CD8-positive, alpha-beta T cell (primary cell): ENCODE measurements at regions of chr7 and their contacts with region 1.

Region 1: GRCh38 chr7:30348083-30348560 is 63.7 kb downstream of the ZNRF2 start:
- DNase-seq: peak in 8 of 9 experiments; percentile 23 to 92 (median 56)
- ATAC-seq: peak; percentile 89
- H3K4me3 ChIP-seq: peak overlapping the region in 1 of 2 experiments; percentile 11
- H3K4me3 Mint-ChIP-seq: peak overlapping the region; percentile 36
- H3K27ac ChIP-seq: peak overlapping the region; percentile 39 to 72
- H3K27ac Mint-ChIP-seq: peak overlapping the region; percentile 85
- H3K4me1 ChIP-seq: peaks cover 21% of the 10 kb centered on the region
- H3K4me1 Mint-ChIP-seq: peaks cover 59% of the 10 kb centered on the region
- H3K27me3 ChIP-seq: no peaks in the 10 kb centered on the region
- H3K27me3 Mint-ChIP-seq: no peaks in the 10 kb centered on the region
- CTCF ChIP-seq: no peak

Region 2: GRCh38 chr7:30038182-30038980 is 309.7 kb before region 1 on chr7:
- CTCF ChIA-PET with region 1: no interaction called
- POLR2A ChIA-PET with region 1: no interaction called
- intact Hi-C with region 1: no loop called
- DNase-seq: no peak
- ATAC-seq: no peak
- H3K4me3 ChIP-seq: no peak overlapping the region
- H3K4me3 Mint-ChIP-seq: no peak overlapping the region
- H3K27ac ChIP-seq: no peak overlapping the region
- H3K27ac Mint-ChIP-seq: no peak overlapping the region
- H3K4me1 ChIP-seq: no peaks in the 10 kb centered on the region
- H3K4me1 Mint-ChIP-seq: peaks cover 17% of the 10 kb centered on the region
- H3K27me3 ChIP-seq: no peaks in the 10 kb centered on the region
- H3K27me3 Mint-ChIP-seq: no peaks in the 10 kb centered on the region
- CTCF ChIP-seq: no peak

Region 3: DNA sequence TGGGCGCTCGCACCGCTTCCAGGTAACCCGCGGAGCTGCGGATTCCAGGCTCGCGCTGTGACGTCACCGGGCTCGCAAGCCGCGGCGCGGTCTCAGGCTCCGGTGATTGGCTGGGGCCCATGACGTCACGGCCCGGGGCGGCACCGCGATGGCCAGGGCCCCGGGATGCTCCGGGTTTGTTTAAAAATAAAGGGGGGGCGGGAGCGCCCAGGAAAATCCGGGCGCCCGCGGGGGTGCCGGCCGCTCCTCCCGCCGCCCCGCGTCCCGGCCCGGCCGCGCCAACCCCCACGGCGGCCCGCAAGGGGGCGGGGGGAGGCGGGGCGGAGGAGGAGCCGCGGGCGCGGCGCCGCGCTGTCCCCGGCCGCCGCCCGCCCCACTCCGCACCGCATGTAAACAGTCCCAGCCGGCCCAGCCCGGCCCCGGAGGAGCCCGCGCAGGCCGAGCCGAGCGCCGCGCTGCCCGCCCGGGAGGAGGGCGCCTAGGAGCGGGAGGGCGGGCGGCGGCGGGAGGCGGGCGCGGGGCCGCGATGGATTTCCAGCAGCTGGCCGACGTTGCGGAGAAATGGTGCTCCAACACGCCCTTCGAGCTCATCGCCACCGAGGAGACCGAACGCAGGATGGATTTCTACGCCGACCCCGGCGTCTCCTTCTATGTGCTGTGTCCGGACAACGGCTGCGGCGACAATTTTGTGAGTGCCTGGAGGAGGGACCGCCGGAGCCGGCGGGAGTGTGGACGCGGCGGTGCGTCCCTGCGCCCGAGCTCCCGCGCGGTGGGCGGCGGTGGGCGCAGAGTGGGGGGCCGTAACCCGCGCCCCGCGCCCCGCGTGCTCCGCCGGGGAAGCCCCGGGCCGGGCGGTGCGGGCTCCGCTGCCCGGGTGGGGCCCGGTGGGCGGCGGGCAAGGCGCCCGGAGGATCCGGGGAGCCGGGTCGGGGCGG is 213.2 kb before region 1 on chr7 and contains the start of gene MTURN:
- CTCF ChIA-PET with region 1: interaction called, 3 read pairs
- POLR2A ChIA-PET with region 1: interaction called, 3 read pairs
- intact Hi-C with region 1: loop called (anchors 5 to 10 kb)
- DNase-seq: peak; percentile 68 to 95 (median 86)
- ATAC-seq: peak; percentile 80
- H3K4me3 ChIP-seq: peak within 1 kb of the TSS; percentile 74 to 78
- H3K4me3 Mint-ChIP-seq: peak within 1 kb of the TSS; percentile 91
- H3K27ac ChIP-seq: peak within 1 kb of the TSS; percentile 4 to 49
- H3K27ac Mint-ChIP-seq: peak within 1 kb of the TSS; percentile 90
- H3K4me1 ChIP-seq: peaks cover 15% of the 10 kb centered on the region
- H3K4me1 Mint-ChIP-seq: peaks cover 11% of the 10 kb centered on the region
- H3K27me3 ChIP-seq: no peaks in the 10 kb centered on the region
- H3K27me3 Mint-ChIP-seq: no peaks in the 10 kb centered on the region
- CTCF ChIP-seq: no peak
- total RNA-seq, gene MTURN: 16.1 to 19.7 TPM

Region 4: GRCh38 chr7:30276203-30276900 is 71.8 kb before region 1 on chr7:
- CTCF ChIA-PET with region 1: interaction called, 75 read pairs
- POLR2A ChIA-PET with region 1: interaction called, 5 read pairs
- intact Hi-C with region 1: loop called (anchors 1 to 2 kb)
- DNase-seq: peak; percentile 10 to 77 (median 55)
- ATAC-seq: peak; percentile 86
- H3K4me3 ChIP-seq: no peak overlapping the region
- H3K4me3 Mint-ChIP-seq: no peak overlapping the region
- H3K27ac ChIP-seq: no peak overlapping the region
- H3K27ac Mint-ChIP-seq: no peak overlapping the region
- H3K4me1 ChIP-seq: no peaks in the 10 kb centered on the region
- H3K4me1 Mint-ChIP-seq: peaks cover 9% of the 10 kb centered on the region
- H3K27me3 ChIP-seq: no peaks in the 10 kb centered on the region
- H3K27me3 Mint-ChIP-seq: no peaks in the 10 kb centered on the region
- CTCF ChIP-seq: peak; percentile 69

Region 5: DNA sequence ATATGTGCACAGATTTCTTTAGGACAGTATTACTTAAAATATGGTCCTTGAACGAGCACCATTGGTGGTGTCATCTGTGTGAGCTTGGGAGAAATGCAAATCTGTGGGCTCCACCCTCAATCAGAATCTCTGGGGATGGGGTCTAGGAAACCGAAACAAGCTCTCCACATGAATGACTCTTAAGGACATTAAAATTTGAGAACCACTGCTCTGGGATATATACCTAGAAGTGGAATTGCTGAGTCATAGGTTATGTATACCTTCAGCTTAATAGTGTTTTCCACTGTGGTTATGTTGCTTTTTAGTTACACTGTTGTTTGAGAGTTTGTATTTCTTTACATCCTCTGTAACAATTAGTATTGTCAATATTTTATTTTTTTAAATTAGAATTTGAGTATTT is 39.7 kb before region 1 on chr7:
- CTCF ChIA-PET with region 1: interaction called, 5 read pairs
- POLR2A ChIA-PET with region 1: interaction called, 3 read pairs
- intact Hi-C with region 1: loop called in 1 of 2 experiments (anchors 5 kb)
- DNase-seq: no peak
- ATAC-seq: no peak
- H3K4me3 ChIP-seq: no peak overlapping the region
- H3K4me3 Mint-ChIP-seq: no peak overlapping the region
- H3K27ac ChIP-seq: no peak overlapping the region
- H3K27ac Mint-ChIP-seq: no peak overlapping the region
- H3K4me1 ChIP-seq: peaks cover 25% of the 10 kb centered on the region
- H3K4me1 Mint-ChIP-seq: peaks cover 79% of the 10 kb centered on the region
- H3K27me3 ChIP-seq: no peaks in the 10 kb centered on the region
- H3K27me3 Mint-ChIP-seq: no peaks in the 10 kb centered on the region
- CTCF ChIP-seq: no peak

Region 6: DNA sequence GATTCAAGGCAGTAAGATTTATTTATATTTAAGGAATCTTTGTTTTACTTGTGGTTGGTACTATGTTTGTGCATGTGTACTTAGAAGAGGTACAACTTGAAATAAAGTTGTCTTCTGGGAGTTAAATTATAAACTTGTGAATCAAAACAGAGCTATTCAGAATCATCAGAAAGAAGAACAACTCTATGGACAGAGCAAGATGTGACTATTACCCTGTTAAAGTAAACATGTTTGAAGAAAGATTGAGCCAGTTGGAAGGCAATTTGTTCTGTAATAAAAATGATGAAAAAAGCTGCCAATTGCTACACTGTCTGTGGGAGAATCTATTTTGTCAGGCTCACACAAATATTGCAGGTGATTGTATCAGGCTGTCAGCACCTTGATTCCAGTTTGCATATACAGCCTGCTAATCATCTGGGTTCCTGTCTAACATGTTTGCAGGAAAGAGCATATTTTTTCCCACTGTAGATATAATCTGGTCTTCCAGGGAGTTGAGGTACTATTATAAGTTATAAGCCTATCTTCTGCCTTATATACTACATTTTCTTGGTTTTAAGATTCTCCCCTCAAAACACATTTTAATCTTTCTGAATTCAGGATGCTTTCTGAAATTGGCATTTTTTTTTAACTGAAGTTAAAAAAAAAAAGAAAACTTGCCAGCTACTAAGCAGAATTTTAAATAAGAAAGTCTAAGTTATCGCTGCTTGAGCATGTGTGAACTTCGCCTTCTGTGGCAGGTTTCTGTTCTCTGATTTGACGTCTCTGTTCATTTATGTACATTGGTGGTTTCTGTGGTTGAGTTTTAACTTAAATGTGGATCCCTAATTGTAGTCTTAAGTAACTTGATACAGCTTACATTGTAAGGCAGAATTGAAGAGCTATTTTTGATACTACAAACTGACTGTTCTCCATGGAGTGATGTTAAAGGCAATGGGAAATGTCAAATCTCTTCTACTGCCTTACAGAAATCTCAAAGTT is 17.7 kb before region 1 on chr7:
- CTCF ChIA-PET with region 1: interaction called, 4 read pairs
- POLR2A ChIA-PET with region 1: interaction called, 5 read pairs
- intact Hi-C with region 1: loop called (anchors 1 to 2 kb)
- DNase-seq: peak in 3 of 9 experiments; percentile 38 to 84 (median 68)
- ATAC-seq: peak; percentile 84
- H3K4me3 ChIP-seq: peak overlapping the region in 1 of 2 experiments; percentile 12
- H3K4me3 Mint-ChIP-seq: peak overlapping the region; percentile 65
- H3K27ac ChIP-seq: peak overlapping the region in 1 of 2 experiments; percentile 66
- H3K27ac Mint-ChIP-seq: peak overlapping the region; percentile 81
- H3K4me1 ChIP-seq: peaks cover 26% of the 10 kb centered on the region
- H3K4me1 Mint-ChIP-seq: peaks cover 71% of the 10 kb centered on the region
- H3K27me3 ChIP-seq: no peaks in the 10 kb centered on the region
- H3K27me3 Mint-ChIP-seq: no peaks in the 10 kb centered on the region
- CTCF ChIP-seq: no peak

Region 7: GRCh38 chr7:30519114-30519513 is 171.0 kb after region 1 on chr7:
- CTCF ChIA-PET with region 1: no interaction called
- POLR2A ChIA-PET with region 1: no interaction called
- intact Hi-C with region 1: no loop called
- DNase-seq: no peak
- ATAC-seq: no peak
- H3K4me3 ChIP-seq: no peak overlapping the region
- H3K4me3 Mint-ChIP-seq: no peak overlapping the region
- H3K27ac ChIP-seq: no peak overlapping the region
- H3K27ac Mint-ChIP-seq: no peak overlapping the region
- H3K4me1 ChIP-seq: no peaks in the 10 kb centered on the region
- H3K4me1 Mint-ChIP-seq: no peaks in the 10 kb centered on the region
- H3K27me3 ChIP-seq: no peaks in the 10 kb centered on the region
- H3K27me3 Mint-ChIP-seq: no peaks in the 10 kb centered on the region
- CTCF ChIP-seq: no peak

Region 8: DNA sequence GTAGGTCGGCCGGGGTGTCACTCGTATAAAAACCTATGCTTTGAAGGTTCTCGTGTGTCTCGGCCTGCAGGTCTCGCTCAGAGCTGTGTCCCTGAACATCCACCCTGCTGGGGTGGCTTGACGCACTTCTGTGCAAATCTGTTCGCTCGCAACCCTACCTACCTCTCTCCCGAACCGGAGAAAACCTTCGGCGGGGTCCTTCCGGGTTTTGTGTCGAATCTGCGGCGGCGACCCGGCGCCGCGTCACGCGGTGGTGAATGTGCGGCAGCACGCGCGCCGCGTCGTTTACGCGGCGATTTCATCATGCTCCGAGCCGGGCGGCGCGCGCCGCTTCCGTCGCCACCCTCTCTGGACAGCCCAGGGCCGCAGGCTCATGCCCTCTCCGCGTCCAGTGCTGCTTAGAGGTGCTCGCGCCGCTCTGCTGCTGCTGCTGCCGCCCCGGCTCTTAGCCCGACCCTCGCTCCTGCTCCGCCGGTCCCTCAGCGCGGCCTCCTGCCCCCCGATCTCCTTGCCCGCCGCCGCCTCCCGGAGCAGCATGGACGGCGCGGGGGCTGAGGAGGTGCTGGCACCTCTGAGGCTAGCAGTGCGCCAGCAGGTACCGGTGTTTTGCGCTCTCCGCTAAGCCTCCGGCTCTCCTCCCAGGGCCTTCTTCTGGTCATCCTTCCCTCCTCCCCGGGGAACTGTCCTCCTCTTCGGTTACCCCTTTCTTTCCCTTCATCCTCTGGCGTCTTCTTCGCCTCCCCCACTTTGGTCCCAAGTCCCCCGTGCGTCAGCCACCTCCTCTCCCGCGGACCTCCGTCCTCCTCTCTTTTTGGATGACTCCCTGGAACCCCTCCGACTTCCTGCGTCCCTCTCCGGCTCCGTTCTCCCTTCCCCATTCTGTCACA is 246.7 kb after region 1 on chr7 and contains the start of gene GARS1:
- CTCF ChIA-PET with region 1: no interaction called
- POLR2A ChIA-PET with region 1: no interaction called
- intact Hi-C with region 1: loop called in 1 of 2 experiments (anchors 10 kb)
- DNase-seq: peak; percentile 81 to 95 (median 89)
- ATAC-seq: peak; percentile 83
- H3K4me3 ChIP-seq: peak within 1 kb of the TSS; percentile 72 to 87
- H3K4me3 Mint-ChIP-seq: peak within 1 kb of the TSS; percentile 99
- H3K27ac ChIP-seq: peak within 1 kb of the TSS; percentile 90 to 93
- H3K27ac Mint-ChIP-seq: peak within 1 kb of the TSS; percentile 99
- H3K4me1 ChIP-seq: peaks cover 36% of the 10 kb centered on the region
- H3K4me1 Mint-ChIP-seq: peaks cover 73% of the 10 kb centered on the region
- H3K27me3 ChIP-seq: no peaks in the 10 kb centered on the region
- H3K27me3 Mint-ChIP-seq: no peaks in the 10 kb centered on the region
- CTCF ChIP-seq: no peak
- total RNA-seq, gene GARS1: 119 to 121 TPM